GM12878 (cell line): ENCODE measurements at regions of chr7 and their contacts with region 1.

Region 1: GRCh38 chr7:114426382-114427223 is 12.0 kb downstream of the FOXP2 start:
- DNase-seq: no peak
- ATAC-seq: peak; percentile 69
- H3K4me3 ChIP-seq: no peak overlapping the region
- H3K27ac ChIP-seq: no peak overlapping the region
- H3K4me1 ChIP-seq: no peaks in the 10 kb centered on the region
- H3K27me3 ChIP-seq: no peaks in the 10 kb centered on the region
- CTCF ChIP-seq: no peak; a peak in 1 of 6 replicates
- EP300 ChIP-seq: no peak
- POLR2A ChIP-seq: no peak
- RAD21 ChIP-seq: peak; percentile 54

Region 2: DNA sequence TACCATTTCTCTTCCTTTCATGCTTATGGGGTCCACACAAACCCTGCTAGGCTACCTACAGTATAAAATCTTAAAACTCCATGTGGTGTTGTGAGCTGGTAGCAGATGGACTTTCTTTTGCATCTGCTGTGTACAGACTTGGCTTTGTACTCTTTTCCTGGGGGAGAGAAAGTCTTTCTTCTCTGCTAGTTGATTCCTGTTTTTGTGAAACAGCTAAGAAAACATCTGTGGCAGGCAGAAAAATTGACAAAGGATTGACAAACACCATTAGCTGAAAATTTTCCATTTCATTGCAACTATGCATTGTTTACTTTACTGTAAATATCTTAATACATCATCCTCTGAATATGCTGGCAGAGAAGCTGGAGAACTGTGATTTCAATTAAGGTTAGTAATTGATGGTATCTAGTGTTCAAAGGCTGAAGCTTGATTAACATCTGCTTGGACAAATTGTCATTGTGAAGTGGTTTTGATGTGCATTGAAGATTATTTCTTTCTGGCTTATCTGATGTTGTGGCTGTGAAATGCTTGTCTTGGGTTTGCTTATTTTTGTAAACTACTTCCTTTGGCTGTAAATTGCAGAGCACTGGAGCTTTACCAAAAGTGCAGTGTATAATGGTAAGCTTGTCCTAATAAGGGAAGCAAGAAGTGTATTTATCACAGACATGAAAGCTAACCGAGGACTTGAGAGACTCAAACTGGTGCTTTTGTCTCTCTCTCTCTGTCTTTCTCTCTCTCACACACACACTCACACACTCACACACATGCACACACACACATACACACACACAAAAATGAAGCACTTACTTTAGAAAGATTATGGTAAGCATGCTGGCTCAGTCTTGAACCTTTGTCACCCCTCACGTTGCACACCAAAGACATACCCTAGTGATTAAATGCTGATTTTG is 12.2 kb before region 1 on chr7 and contains the start of gene FOXP2:
- CTCF ChIA-PET with region 1: interaction called, 32 read pairs
- POLR2A ChIA-PET with region 1: no interaction called
- RAD21 ChIA-PET with region 1: interaction called, 5 read pairs
- SMC1A ChIA-PET with region 1: interaction called, 4 read pairs
- in situ Hi-C with region 1: no loop called
- intact Hi-C with region 1: no loop called
- DNase-seq: no peak
- ATAC-seq: peak; percentile 56
- H3K4me3 ChIP-seq: no peak within 1 kb of the TSS
- H3K27ac ChIP-seq: no peak within 1 kb of the TSS
- H3K4me1 ChIP-seq: no peaks in the 10 kb centered on the region
- H3K27me3 ChIP-seq: peaks cover 0 to 2% of the 10 kb centered on the region in 2 experiments; a peak in 2 of 4 replicates
- CTCF ChIP-seq: no peak
- EP300 ChIP-seq: no peak
- POLR2A ChIP-seq: no peak
- RAD21 ChIP-seq: no peak
- polyA plus RNA-seq, gene FOXP2: 0.99 to 1.2 TPM

Region 3: GRCh38 chr7:114439581-114439980 is 13.0 kb after region 1 on chr7:
- CTCF ChIA-PET with region 1: interaction called, 4 read pairs
- POLR2A ChIA-PET with region 1: no interaction called
- RAD21 ChIA-PET with region 1: no interaction called
- SMC1A ChIA-PET with region 1: interaction called, 13 read pairs
- in situ Hi-C with region 1: no loop called
- intact Hi-C with region 1: no loop called
- DNase-seq: no peak
- ATAC-seq: no peak
- H3K4me3 ChIP-seq: no peak overlapping the region
- H3K27ac ChIP-seq: no peak overlapping the region
- H3K4me1 ChIP-seq: no peaks in the 10 kb centered on the region
- H3K27me3 ChIP-seq: no peaks in the 10 kb centered on the region
- CTCF ChIP-seq: no peak
- EP300 ChIP-seq: no peak
- POLR2A ChIP-seq: no peak
- RAD21 ChIP-seq: no peak

Region 4: DNA sequence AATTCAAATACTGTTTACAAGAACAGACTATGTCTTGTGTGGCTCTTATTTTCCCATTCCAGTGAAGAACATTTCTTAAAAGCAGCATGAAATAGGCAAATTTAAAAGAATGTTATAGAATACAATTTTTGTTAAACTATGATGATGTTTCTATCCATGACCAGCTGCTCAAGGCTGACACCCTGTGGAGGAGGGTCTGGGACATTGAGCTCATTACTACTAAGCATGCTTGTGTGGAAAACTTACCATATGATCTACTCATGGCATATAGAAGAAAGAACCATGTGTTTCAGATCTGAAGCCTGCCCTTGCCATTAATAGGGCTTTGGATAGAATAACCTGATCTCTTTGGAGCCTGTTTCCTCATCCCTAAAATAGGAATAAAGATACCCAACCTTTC is 113.0 kb after region 1 on chr7:
- CTCF ChIA-PET with region 1: interaction called, 3 read pairs
- POLR2A ChIA-PET with region 1: no interaction called
- RAD21 ChIA-PET with region 1: interaction called, 6 read pairs
- SMC1A ChIA-PET with region 1: interaction called, 11 read pairs
- in situ Hi-C with region 1: no loop called
- intact Hi-C with region 1: loop called (anchors 5 kb)
- DNase-seq: no peak
- ATAC-seq: peak; percentile 72
- H3K4me3 ChIP-seq: no peak overlapping the region
- H3K27ac ChIP-seq: no peak overlapping the region
- H3K4me1 ChIP-seq: no peaks in the 10 kb centered on the region
- H3K27me3 ChIP-seq: no peaks in the 10 kb centered on the region
- CTCF ChIP-seq: peak in 2 of 3 experiments; percentile 28 to 33; a peak in 3 of 6 replicates
- EP300 ChIP-seq: no peak
- POLR2A ChIP-seq: no peak
- RAD21 ChIP-seq: peak; percentile 49; the same call in 1 of the 2 replicates

Region 5: GRCh38 chr7:114574384-114574783 is 147.8 kb after region 1 on chr7:
- CTCF ChIA-PET with region 1: no interaction called
- POLR2A ChIA-PET with region 1: no interaction called
- RAD21 ChIA-PET with region 1: no interaction called
- SMC1A ChIA-PET with region 1: no interaction called
- in situ Hi-C with region 1: no loop called
- intact Hi-C with region 1: no loop called
- DNase-seq: no peak
- ATAC-seq: peak; percentile 70
- H3K4me3 ChIP-seq: no peak overlapping the region
- H3K27ac ChIP-seq: no peak overlapping the region
- H3K4me1 ChIP-seq: no peaks in the 10 kb centered on the region
- H3K27me3 ChIP-seq: no peaks in the 10 kb centered on the region
- CTCF ChIP-seq: no peak
- EP300 ChIP-seq: no peak
- POLR2A ChIP-seq: no peak
- RAD21 ChIP-seq: no peak